Activated CD4-positive, alpha-beta memory T cell treated with anti-CD3 and anti-CD28 coated beads for 36 hours (primary cell): ENCODE measurements at regions of chr12 and their contacts with region 1.

Region 1: DNA sequence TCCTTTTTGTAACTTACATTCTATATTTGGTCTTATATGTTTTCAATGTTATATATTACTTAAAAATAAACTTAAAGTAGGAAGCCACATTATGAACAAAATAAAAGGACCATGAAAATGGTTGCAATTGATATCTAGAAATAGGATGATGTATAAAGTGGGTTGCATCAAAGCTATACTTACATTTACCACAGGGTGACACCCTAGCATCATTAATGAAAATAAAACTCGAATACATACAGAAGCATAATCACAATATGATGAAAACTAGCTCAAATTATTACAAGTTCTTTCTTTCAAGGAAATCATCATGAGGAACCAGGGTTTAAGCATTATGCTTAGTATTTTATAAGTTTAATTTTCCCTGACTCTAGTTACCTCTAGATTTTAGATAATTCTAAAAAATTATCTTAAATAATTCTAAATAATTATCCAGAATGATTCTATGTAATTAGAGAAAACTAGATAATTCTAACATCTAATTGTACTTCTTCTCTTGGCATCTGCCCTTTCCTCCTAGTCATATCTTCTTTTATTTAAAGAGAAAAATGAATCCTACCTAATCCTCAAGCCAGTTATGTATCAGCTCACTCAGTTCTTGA is 31.2 kb downstream of the TAS2R7 start:
- DNase-seq: no peak
- H3K4me3 Mint-ChIP-seq: no peak overlapping the region
- H3K27ac Mint-ChIP-seq: no peak overlapping the region
- H3K4me1 Mint-ChIP-seq: no peaks in the 10 kb centered on the region
- H3K27me3 Mint-ChIP-seq: peaks cover 28% of the 10 kb centered on the region

Region 2: GRCh38 chr12:10867381-10867780 is 96.1 kb after region 1 on chr12:
- CTCF ChIA-PET with region 1: no interaction called
- POLR2A ChIA-PET with region 1: no interaction called
- intact Hi-C with region 1: no loop called
- DNase-seq: no peak
- H3K4me3 Mint-ChIP-seq: no peak overlapping the region
- H3K27ac Mint-ChIP-seq: no peak overlapping the region
- H3K4me1 Mint-ChIP-seq: no peaks in the 10 kb centered on the region
- H3K27me3 Mint-ChIP-seq: no peaks in the 10 kb centered on the region

Region 3: GRCh38 chr12:11202811-11203210 is 431.6 kb after region 1 on chr12:
- CTCF ChIA-PET with region 1: interaction called, 76 read pairs
- POLR2A ChIA-PET with region 1: no interaction called
- intact Hi-C with region 1: loop called (anchors 1 kb)
- DNase-seq: no peak
- H3K4me3 Mint-ChIP-seq: no peak overlapping the region
- H3K27ac Mint-ChIP-seq: no peak overlapping the region
- H3K4me1 Mint-ChIP-seq: no peaks in the 10 kb centered on the region
- H3K27me3 Mint-ChIP-seq: no peaks in the 10 kb centered on the region